MCF 10A (cell line): ENCODE measurements at regions of chr5 and their contacts with region 1.

Region 1: DNA sequence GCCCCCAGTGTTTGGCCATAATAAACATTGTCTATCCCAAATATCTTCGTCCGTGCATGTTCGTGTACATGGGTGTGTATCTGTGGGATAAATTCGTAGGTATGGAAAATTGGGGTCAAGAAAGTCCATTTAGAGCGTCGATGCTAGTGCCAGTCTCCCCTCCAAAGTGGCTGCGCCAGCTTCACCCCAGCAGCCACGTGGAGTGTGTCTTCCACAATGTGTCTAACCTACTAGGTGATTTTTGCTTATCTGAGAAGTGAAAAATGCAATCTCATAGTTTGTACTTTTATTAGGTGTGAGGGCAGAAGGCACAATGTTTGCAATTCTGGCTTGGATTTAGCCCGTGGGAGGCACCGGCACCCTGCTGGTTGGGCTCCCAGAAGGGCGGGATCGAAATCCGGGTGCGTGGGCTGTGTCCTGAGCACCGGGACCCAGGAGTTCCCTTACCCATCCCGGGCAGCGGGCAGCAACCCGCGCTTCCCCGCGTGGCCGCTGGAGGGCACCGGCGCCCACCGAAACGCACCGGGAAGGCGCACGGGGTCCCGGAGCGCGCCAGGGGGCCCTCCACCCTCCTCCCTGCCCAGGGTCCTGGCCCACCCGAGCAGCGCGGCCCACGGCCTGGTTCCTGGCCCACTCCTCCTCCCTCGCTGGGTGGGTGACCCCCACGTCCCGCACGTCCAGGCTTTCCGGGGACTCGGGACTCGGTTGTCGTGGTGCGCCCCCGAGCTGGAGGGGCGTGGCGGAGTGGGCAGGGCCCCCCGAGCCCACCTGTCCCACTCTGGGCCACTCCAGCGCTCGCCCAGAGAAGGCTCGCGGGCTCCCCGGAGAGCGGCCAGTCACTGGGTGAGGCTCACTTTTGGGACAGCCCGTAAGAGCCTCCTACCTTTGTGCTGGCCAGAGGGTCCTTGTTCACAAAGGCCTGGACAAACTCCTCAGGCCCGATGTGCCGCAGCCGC is 55.4 kb upstream of the RNF130 start:
- DNase-seq: peak; percentile 58
- H3K4me3 Mint-ChIP-seq: no peak overlapping the region
- H3K27ac Mint-ChIP-seq: no peak overlapping the region
- H3K4me1 Mint-ChIP-seq: peaks cover 17% of the 10 kb centered on the region
- H3K27me3 Mint-ChIP-seq: peaks cover 32% of the 10 kb centered on the region
- CTCF ChIP-seq: peak; percentile 99

Region 2: DNA sequence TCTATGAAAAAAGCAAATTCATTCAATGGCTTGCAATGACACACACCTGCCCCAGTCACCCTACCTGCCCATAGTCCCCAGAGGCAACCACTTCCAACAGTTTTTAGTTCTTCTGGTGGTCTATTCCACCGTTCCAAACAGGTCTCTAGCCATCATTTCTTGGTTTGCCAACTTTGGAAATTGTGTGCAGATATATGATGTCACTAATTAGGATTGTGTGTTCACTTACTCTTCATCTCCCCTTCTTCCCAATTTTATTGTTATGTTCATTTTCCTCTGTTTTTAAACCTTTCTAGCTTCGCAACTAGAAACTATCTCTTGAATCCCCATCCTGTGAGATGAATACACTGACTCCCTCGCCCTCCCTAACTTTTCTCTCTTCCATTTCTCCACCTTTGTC is 62.7 kb before region 1 on chr5:
- CTCF ChIA-PET with region 1: no interaction called
- POLR2A ChIA-PET with region 1: no interaction called
- intact Hi-C with region 1: no loop called
- DNase-seq: no peak
- H3K4me3 Mint-ChIP-seq: no peak overlapping the region
- H3K27ac Mint-ChIP-seq: no peak overlapping the region
- H3K4me1 Mint-ChIP-seq: peaks cover 22% of the 10 kb centered on the region
- H3K27me3 Mint-ChIP-seq: no peaks in the 10 kb centered on the region
- CTCF ChIP-seq: no peak

Region 3: DNA sequence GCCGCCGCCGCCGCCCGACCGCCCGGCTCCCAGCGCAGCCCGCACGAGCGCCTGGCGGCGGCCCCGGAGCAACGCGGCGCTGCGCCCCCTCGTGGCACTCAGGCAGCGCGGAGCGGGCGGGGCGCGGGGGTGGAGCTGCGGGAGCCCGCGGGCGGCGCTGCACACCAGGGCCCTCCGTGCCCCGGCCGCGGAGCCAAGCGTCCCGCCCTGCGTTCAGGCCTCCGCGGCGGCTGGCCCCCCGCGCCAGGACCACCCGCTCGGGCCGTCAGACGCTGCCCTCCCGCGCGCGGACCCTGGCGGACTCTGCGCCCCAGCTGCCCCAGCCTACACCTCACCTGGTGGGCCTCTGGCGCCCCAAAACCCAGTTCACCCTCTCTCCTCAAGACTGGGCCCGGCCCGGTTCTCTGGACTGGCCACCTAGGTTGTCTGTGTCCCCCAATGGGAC is 82.2 kb after region 1 on chr5 and contains the start of gene RASGEF1C:
- CTCF ChIA-PET with region 1: interaction called, 51 read pairs
- POLR2A ChIA-PET with region 1: interaction called, 3 read pairs
- intact Hi-C with region 1: loop called (anchors 2 kb)
- DNase-seq: peak; percentile 72
- H3K4me3 Mint-ChIP-seq: peak within 1 kb of the TSS; percentile 66
- H3K27ac Mint-ChIP-seq: no peak within 1 kb of the TSS
- H3K4me1 Mint-ChIP-seq: peaks cover 12% of the 10 kb centered on the region
- H3K27me3 Mint-ChIP-seq: peaks cover 12% of the 10 kb centered on the region
- CTCF ChIP-seq: peak; percentile 49
- total RNA-seq, gene RASGEF1C: not detected in 2 replicates

Region 4: GRCh38 chr5:180315762-180316212 is 188.8 kb after region 1 on chr5:
- CTCF ChIA-PET with region 1: interaction called, 4 read pairs
- POLR2A ChIA-PET with region 1: no interaction called
- intact Hi-C with region 1: loop called (anchors 1 kb)
- DNase-seq: peak; percentile 82
- H3K4me3 Mint-ChIP-seq: no peak overlapping the region
- H3K27ac Mint-ChIP-seq: no peak overlapping the region
- H3K4me1 Mint-ChIP-seq: no peaks in the 10 kb centered on the region
- H3K27me3 Mint-ChIP-seq: no peaks in the 10 kb centered on the region
- CTCF ChIP-seq: peak; percentile 95

Region 5: GRCh38 chr5:180639741-180640610 is 513.0 kb after region 1 on chr5:
- CTCF ChIA-PET with region 1: no interaction called
- POLR2A ChIA-PET with region 1: no interaction called
- intact Hi-C with region 1: no loop called
- DNase-seq: no peak
- H3K4me3 Mint-ChIP-seq: no peak overlapping the region
- H3K27ac Mint-ChIP-seq: no peak overlapping the region
- H3K4me1 Mint-ChIP-seq: no peaks in the 10 kb centered on the region
- H3K27me3 Mint-ChIP-seq: peaks cover 34% of the 10 kb centered on the region
- CTCF ChIP-seq: no peak

Region 6: GRCh38 chr5:180670586-180671359 is 543.8 kb after region 1 on chr5:
- CTCF ChIA-PET with region 1: no interaction called
- POLR2A ChIA-PET with region 1: no interaction called
- intact Hi-C with region 1: loop called (anchors 1 kb)
- DNase-seq: peak; percentile 75
- H3K4me3 Mint-ChIP-seq: no peak overlapping the region
- H3K27ac Mint-ChIP-seq: no peak overlapping the region
- H3K4me1 Mint-ChIP-seq: peaks cover 8% of the 10 kb centered on the region
- H3K27me3 Mint-ChIP-seq: peaks cover 13% of the 10 kb centered on the region
- CTCF ChIP-seq: peak; percentile 81